Endothelial cell of umbilical vein (primary cell): ENCODE measurements at regions of chr3 and their contacts with region 1.

Region 1: DNA sequence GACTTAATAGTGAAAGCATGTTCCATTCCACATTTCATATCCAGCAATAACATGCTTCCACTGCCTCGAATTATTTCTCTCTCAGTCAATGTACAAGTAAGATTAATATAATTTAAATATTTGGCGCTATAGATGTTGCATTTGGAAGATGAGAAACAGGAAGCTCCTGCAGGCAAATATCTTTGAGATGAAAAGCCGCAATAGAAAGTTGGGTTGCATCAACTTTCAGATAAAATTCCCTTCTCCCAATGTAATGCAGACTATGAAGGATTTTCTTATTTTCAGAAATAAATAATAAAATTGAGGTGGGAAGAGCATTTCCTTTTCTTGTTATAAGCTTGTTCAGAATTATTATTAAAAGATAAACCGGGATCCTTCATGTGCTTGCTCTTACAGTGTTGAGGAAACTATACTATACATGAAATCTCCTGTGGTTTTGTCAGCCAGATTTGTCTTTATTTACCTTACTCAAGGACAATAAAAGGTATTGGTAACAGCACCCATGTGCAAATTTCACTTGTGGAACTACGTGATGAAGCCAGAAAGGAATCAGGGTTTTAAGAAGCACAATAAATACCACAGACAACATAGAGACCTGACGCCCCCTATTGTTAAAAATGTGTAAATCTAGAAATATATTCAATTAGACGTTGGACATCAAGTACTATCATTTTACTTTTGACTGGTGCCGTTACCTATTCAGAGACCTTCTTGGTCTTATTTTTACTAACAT is 307.0 kb downstream of the ARPP21 start:
- DNase-seq: peak; percentile 59
- H3K4me3 ChIP-seq: no peak overlapping the region
- H3K27ac ChIP-seq: no peak overlapping the region
- H3K4me1 ChIP-seq: peaks cover 10% of the 10 kb centered on the region
- H3K27me3 ChIP-seq: peaks cover 5 to 11% of the 10 kb centered on the region in 2 experiments
- CTCF ChIP-seq: peak; percentile 20 to 50
- POLR2A ChIP-seq: no peak

Region 2: DNA sequence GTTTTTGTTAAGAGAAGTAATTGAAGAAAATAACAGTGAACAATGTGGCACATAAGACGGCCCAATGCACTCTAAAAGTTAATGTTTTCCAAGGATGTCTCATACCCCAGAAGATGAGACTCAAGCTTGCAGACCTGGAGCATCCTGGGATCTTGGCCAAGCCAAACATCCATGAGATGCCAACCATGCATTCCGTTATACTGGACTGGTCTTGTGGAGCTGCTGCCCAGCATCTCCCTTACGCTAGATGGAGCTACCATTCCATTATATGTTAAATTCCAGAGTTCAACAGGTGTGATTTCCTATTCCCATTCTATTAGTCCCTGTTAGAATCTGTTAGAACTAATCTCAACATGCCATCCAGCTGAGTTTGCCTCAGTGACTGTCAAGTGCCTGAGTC is 1966.0 kb before region 1 on chr3:
- CTCF ChIA-PET with region 1: interaction called, 17 read pairs
- POLR2A ChIA-PET with region 1: no interaction called
- dilution Hi-C with region 1: no loop called
- intact Hi-C with region 1: no loop called
- DNase-seq: peak; percentile 31
- H3K4me3 ChIP-seq: no peak overlapping the region
- H3K27ac ChIP-seq: no peak overlapping the region
- H3K4me1 ChIP-seq: no peaks in the 10 kb centered on the region
- H3K27me3 ChIP-seq: peaks cover 0 to 2% of the 10 kb centered on the region in 2 experiments
- CTCF ChIP-seq: peak; percentile 41 to 44
- POLR2A ChIP-seq: no peak

Region 3: GRCh38 chr3:35181582-35181981 is 764.7 kb before region 1 on chr3:
- CTCF ChIA-PET with region 1: no interaction called
- POLR2A ChIA-PET with region 1: no interaction called
- dilution Hi-C with region 1: no loop called
- intact Hi-C with region 1: no loop called
- DNase-seq: no peak
- H3K4me3 ChIP-seq: no peak overlapping the region
- H3K27ac ChIP-seq: no peak overlapping the region
- H3K4me1 ChIP-seq: no peaks in the 10 kb centered on the region
- H3K27me3 ChIP-seq: no peaks in the 10 kb centered on the region
- CTCF ChIP-seq: no peak
- POLR2A ChIP-seq: no peak

Region 4: GRCh38 chr3:35275768-35276167 is 670.5 kb before region 1 on chr3:
- CTCF ChIA-PET with region 1: no interaction called
- POLR2A ChIA-PET with region 1: no interaction called
- dilution Hi-C with region 1: no loop called
- intact Hi-C with region 1: no loop called
- DNase-seq: no peak
- H3K4me3 ChIP-seq: no peak overlapping the region
- H3K27ac ChIP-seq: no peak overlapping the region
- H3K4me1 ChIP-seq: no peaks in the 10 kb centered on the region
- H3K27me3 ChIP-seq: no peaks in the 10 kb centered on the region
- CTCF ChIP-seq: no peak
- POLR2A ChIP-seq: no peak